ENCODE measurements at regions of chr17 and their contacts with region 1.

Region 1: GRCh38 chr17:18280766-18281371 is 20.4 kb downstream of the MIEF2 start:
- DNase-seq: no peak
- ATAC-seq: no peak
- H3K4me3 ChIP-seq: no peak overlapping the region
- H3K4me3 Mint-ChIP-seq: no peak overlapping the region
- H3K27ac ChIP-seq: no peak overlapping the region
- H3K27ac Mint-ChIP-seq: no peak overlapping the region
- H3K4me1 ChIP-seq: no peaks in the 10 kb centered on the region
- H3K4me1 Mint-ChIP-seq: no peaks in the 10 kb centered on the region
- H3K27me3 ChIP-seq: no peaks in the 10 kb centered on the region
- H3K27me3 Mint-ChIP-seq: no peaks in the 10 kb centered on the region

Region 2: GRCh38 chr17:17523001-17523730 is 757.7 kb before region 1 on chr17:
- CTCF ChIA-PET with region 1: no interaction called
- POLR2A ChIA-PET with region 1: interaction called in 1 of 2 experiments, 10 read pairs
- DNase-seq: no peak
- ATAC-seq: no peak
- H3K4me3 ChIP-seq: no peak overlapping the region
- H3K4me3 Mint-ChIP-seq: no peak overlapping the region
- H3K27ac ChIP-seq: no peak overlapping the region
- H3K27ac Mint-ChIP-seq: no peak overlapping the region
- H3K4me1 ChIP-seq: no peaks in the 10 kb centered on the region
- H3K4me1 Mint-ChIP-seq: no peaks in the 10 kb centered on the region
- H3K27me3 ChIP-seq: no peaks in the 10 kb centered on the region
- H3K27me3 Mint-ChIP-seq: no peaks in the 10 kb centered on the region

Region 3: DNA sequence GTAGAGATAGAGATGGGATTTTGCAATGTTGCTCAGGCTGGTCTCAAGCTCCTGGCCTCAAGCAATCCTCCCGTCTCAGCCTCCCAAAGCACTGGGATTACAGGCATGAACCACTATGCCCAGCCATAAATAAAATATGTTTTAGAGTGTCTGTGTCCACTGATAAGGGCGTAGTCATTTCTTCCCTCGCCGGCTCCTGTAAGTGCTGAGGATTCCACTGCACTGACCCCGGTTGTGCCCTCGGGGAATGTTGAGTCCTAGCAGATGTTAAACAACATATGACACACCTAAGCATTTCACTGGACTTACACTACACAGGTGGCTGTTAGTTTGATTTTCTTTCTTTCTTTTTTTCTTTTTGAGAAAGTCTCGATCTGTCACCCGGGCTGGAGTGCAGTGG is 88.1 kb after region 1 on chr17:
- CTCF ChIA-PET with region 1: no interaction called
- POLR2A ChIA-PET with region 1: no interaction called
- DNase-seq: no peak
- ATAC-seq: no peak
- H3K4me3 ChIP-seq: no peak overlapping the region
- H3K4me3 Mint-ChIP-seq: no peak overlapping the region
- H3K27ac ChIP-seq: no peak overlapping the region
- H3K27ac Mint-ChIP-seq: no peak overlapping the region
- H3K4me1 ChIP-seq: peaks cover 0 to 4% of the 10 kb centered on the region in 2 experiments
- H3K4me1 Mint-ChIP-seq: peaks cover 0 to 6% (median 0%) of the 10 kb centered on the region in 3 donors
- H3K27me3 ChIP-seq: peaks cover 0 to 20% of the 10 kb centered on the region in 2 experiments
- H3K27me3 Mint-ChIP-seq: peaks cover 0 to 15% of the 10 kb centered on the region in 2 donors